ENCODE measurements at regions of chr1 and their contacts with region 1.

Region 1: GRCh38 chr1:156385534-156386031 is 16.6 kb downstream of the RHBG start:
- DNase-seq: peak; percentile 84
- H3K4me3 ChIP-seq: no peak overlapping the region
- H3K27ac ChIP-seq: no peak overlapping the region
- H3K4me1 ChIP-seq: peaks cover 0 to 27% (median 13%) of the 10 kb centered on the region in 6 donors
- H3K27me3 ChIP-seq: peaks cover 0 to 54% (median 24%) of the 10 kb centered on the region in 7 donors
- CTCF ChIP-seq: peak; percentile 72 to 92 (median 88)
- POLR2A ChIP-seq: no peak

Region 2: DNA sequence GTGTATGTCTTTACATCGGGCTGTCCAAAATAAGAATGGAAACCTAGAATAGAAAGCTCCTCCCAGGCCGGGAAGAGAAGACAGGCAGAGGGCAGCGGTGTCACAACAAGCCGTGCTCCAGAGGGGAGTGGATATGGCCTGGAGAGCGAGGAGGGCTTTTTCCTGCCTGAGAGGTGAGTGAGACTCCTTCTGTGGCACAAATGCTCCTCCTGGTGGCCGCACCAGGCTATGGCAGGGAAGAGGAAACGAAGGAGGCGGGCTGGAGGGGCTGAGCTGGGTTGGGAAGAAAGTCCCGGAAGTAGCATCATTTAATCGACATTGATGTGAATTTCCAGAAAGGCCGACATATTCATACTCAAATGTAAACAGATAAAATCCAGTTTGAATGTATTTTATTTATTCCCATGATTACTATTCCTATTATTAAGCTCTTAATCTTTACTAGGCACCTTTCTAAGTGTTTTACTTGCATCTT is 60.2 kb after region 1 on chr1:
- intact Hi-C with region 1: loop called (anchors 2 kb)
- DNase-seq: peak; percentile 92
- H3K4me3 ChIP-seq: no peak overlapping the region
- H3K27ac ChIP-seq: no peak overlapping the region
- H3K4me1 ChIP-seq: peaks cover 0 to 9% (median 7%) of the 10 kb centered on the region in 6 donors
- H3K27me3 ChIP-seq: peaks cover 0 to 66% (median 42%) of the 10 kb centered on the region in 7 donors
- CTCF ChIP-seq: peak; percentile 94 to 99 (median 96)
- POLR2A ChIP-seq: no peak

Region 3: DNA sequence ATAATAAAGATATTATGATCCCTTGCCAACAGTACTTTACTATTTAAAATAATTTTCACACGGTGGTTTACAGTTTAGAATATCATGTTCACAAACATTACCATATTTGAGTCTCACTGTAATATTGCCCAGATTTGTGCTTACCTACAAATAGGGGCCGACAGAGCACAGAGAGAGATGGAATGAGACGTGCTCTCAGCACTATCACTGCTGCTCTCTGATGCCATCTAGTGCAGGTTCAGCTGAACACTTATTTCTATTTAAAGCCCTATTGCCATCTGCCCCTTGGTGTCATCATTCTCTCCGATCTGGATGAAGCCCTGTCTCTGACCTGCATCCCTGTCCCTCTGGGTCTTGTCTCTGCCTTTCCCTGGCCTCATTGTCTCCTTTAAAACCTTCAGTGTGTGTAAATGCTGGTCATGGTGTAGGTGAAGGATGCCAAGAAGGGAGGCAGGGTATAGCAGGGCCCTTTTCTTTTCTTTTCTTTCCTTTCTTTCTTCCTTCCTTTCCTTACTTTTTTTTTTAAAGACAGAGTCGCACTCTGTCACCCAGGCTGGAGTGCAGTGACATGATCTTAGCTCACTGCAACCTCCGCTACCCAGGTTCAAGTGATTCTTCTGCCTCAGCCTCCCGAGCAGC is 222.6 kb after region 1 on chr1:
- intact Hi-C with region 1: loop called (anchors 5 kb)
- DNase-seq: no peak
- H3K4me3 ChIP-seq: no peak overlapping the region
- H3K27ac ChIP-seq: peak overlapping the region in 1 of 8 donors; percentile 6
- H3K4me1 ChIP-seq: peaks cover 6 to 25% (median 12%) of the 10 kb centered on the region in 6 donors
- H3K27me3 ChIP-seq: peaks cover 0 to 35% (median 0%) of the 10 kb centered on the region in 7 donors
- CTCF ChIP-seq: peak; percentile 48 to 86 (median 71)
- POLR2A ChIP-seq: no peak